Posterior cingulate gyrus (tissue), 11 donors: ENCODE measurements at regions of chr1 and their contacts with region 1.

Region 1: DNA sequence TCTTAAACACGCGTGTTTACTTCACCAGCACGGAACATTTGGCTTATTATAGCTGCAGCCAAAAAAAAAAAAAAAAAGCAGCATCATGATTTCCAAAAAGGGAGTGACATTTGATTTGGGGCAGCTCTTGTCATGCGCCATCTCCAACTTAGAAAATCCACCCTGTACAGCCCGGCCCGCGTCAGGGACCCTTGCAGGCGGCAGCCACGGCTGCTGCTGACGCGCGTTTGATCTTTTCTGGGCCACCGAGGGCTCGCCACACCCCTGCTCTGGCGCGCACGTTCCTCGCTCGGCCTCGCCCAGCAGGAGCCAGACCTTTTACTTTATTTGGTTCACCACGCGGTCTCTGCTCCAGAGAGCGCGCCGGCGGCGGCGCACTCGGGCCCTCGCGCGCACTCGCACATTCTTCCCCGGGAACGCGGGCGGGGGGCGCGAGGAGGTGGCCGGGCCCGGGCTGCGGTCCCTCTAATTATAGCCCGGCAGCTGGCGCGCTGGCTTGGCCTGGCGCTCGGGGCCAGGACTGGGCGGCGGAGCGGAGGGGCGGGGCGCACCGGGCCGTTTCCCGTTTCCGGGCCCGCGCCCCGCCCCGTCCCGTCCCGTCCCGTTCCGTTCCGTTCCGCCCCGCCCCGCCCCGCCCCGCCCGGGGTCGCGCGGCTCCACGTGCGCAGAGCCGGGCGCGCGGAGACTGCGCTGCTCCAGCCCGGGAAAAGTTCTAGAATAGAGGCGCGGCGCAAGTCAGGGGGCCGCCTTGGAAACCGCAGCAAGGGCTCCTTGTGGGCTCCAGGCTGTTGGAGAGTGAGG is 10.2 kb downstream of the IRF2BP2 start:
- DNase-seq: peak; percentile 70 to 97 (median 78)

Region 2: GRCh38 chr1:234509452-234510328 is 90.1 kb before region 1 on chr1:
- intact Hi-C with region 1: no loop called
- DNase-seq: no peak

Region 3: GRCh38 chr1:234553156-234553863 is 46.5 kb before region 1 on chr1:
- intact Hi-C with region 1: loop called (anchors 5 kb)
- DNase-seq: peak in 1 of 10 donors; percentile 82